CD4-positive, alpha-beta T cell (primary cell): ENCODE measurements at regions of chr22 and their contacts with region 1.

Region 1: GRCh38 chr22:25172153-25172552 is 27.5 kb upstream of the CRYBB3 start:
- DNase-seq: peak in 13 of 14 experiments; percentile 4 to 56 (median 32)
- ATAC-seq: peak; percentile 43
- H3K4me3 ChIP-seq: no peak overlapping the region
- H3K4me3 Mint-ChIP-seq: no peak overlapping the region
- H3K27ac ChIP-seq: no peak overlapping the region
- H3K27ac Mint-ChIP-seq: no peak overlapping the region
- H3K4me1 ChIP-seq: no peaks in the 10 kb centered on the region
- H3K4me1 Mint-ChIP-seq: no peaks in the 10 kb centered on the region
- H3K27me3 ChIP-seq: no peaks in the 10 kb centered on the region
- H3K27me3 Mint-ChIP-seq: no peaks in the 10 kb centered on the region
- CTCF ChIP-seq: peak; percentile 61

Region 2: DNA sequence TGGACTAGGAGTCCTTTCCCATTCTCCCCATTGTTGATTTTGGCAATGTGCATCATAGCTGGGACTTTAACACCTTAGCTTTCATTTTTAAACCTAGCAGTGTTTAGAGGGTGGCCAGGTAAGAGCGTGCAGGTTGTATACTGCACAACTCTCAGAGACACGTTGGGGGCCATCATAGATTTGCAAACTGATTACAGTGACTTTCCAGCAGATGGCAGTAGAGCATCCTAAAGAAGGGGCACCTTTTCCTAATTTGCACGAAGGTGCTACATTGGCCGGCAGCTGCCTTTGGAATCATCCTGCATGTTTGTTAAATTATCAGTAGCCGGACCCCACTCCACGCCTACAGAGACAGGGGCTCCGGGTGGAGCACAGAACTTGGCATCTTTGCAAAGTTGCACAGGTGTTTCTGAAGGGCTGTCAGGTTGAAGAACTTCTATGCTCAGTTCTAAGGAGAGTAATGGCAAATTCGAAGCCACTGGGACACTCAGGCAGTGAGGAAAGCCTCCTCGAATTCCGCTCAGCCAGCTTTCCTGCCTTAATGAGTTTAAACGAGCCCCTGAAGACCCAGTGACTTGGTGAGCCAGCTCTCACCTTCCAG is 233.3 kb before region 1 on chr22:
- CTCF ChIA-PET with region 1: no interaction called
- POLR2A ChIA-PET with region 1: no interaction called
- intact Hi-C with region 1: loop called in 1 of 2 experiments (anchors 5 kb)
- DNase-seq: peak in 5 of 14 experiments; percentile 3 to 70 (median 51)
- ATAC-seq: peak; percentile 62
- H3K4me3 ChIP-seq: no peak overlapping the region
- H3K4me3 Mint-ChIP-seq: no peak overlapping the region
- H3K27ac ChIP-seq: no peak overlapping the region
- H3K27ac Mint-ChIP-seq: no peak overlapping the region
- H3K4me1 ChIP-seq: peaks cover 4% of the 10 kb centered on the region
- H3K4me1 Mint-ChIP-seq: no peaks in the 10 kb centered on the region
- H3K27me3 ChIP-seq: peaks cover 5 to 8% of the 10 kb centered on the region in 2 experiments
- H3K27me3 Mint-ChIP-seq: peaks cover 15% of the 10 kb centered on the region
- CTCF ChIP-seq: peak; percentile 79

Region 3: GRCh38 chr22:24951942-24952836 is 220.0 kb before region 1 on chr22 and contains the start of gene KIAA1671:
- CTCF ChIA-PET with region 1: no interaction called
- POLR2A ChIA-PET with region 1: no interaction called
- intact Hi-C with region 1: loop called in 1 of 2 experiments (anchors 5 kb)
- DNase-seq: peak; percentile 73 to 92 (median 83)
- ATAC-seq: peak; percentile 94
- H3K4me3 ChIP-seq: peak within 1 kb of the TSS; percentile 70
- H3K4me3 Mint-ChIP-seq: peak within 1 kb of the TSS; percentile 90
- H3K27ac ChIP-seq: no peak within 1 kb of the TSS
- H3K27ac Mint-ChIP-seq: no peak within 1 kb of the TSS
- H3K4me1 ChIP-seq: peaks cover 20% of the 10 kb centered on the region
- H3K4me1 Mint-ChIP-seq: peaks cover 19% of the 10 kb centered on the region
- H3K27me3 ChIP-seq: peaks cover 27 to 37% of the 10 kb centered on the region in 2 experiments
- H3K27me3 Mint-ChIP-seq: peaks cover 75% of the 10 kb centered on the region
- CTCF ChIP-seq: peak; percentile 95
- total RNA-seq, gene KIAA1671: 2.6 to 2.9 TPM

Region 4: DNA sequence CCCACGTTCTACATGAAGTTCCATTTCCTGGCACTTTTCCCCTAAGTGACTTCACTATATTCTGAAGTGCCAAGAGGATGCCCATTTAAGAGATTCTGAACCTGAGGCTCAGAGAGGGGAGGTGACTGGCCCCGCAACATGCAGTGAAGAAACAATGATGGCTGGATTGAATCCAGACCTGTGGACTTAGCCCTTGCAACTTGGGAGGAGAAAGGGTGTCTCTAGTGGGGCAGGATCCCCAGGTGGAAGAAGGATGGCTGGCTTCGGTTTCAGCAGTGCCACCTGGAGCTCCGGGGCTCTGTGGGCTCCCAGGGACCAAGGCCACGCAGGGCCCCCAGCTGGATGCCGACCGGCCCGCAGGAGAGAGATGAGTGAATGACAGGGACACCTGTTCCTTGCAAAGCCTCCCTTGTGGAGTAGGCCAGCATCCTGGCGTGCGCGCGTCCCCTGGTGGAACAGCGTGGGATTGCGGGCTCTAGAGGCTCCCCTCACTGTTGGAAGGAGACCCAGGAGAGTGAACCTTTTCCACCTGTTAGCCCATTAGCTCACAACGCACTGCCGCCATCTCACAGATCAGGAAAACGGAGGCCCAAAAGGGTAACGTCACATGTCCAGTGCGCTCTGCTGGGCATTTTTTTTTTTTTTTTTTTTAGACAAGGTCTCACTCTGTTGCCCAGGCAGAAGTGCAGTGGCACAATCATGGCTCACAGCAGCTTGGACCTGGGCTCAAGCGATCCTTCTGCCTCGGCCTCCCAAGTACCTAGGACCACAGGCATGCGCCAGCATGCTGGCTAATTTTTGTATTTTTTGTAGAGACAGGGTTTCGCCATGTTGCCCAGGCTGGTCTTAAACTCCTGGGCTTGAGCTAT is 114.9 kb before region 1 on chr22:
- CTCF ChIA-PET with region 1: interaction called, 3 read pairs
- POLR2A ChIA-PET with region 1: no interaction called
- intact Hi-C with region 1: loop called (anchors 1 kb)
- DNase-seq: peak; percentile 59 to 87 (median 72)
- ATAC-seq: peak; percentile 55
- H3K4me3 ChIP-seq: no peak overlapping the region
- H3K4me3 Mint-ChIP-seq: no peak overlapping the region
- H3K27ac ChIP-seq: no peak overlapping the region
- H3K27ac Mint-ChIP-seq: no peak overlapping the region
- H3K4me1 ChIP-seq: peaks cover 27% of the 10 kb centered on the region
- H3K4me1 Mint-ChIP-seq: peaks cover 33% of the 10 kb centered on the region
- H3K27me3 ChIP-seq: no peaks in the 10 kb centered on the region
- H3K27me3 Mint-ChIP-seq: no peaks in the 10 kb centered on the region
- CTCF ChIP-seq: peak; percentile 80

Region 5: DNA sequence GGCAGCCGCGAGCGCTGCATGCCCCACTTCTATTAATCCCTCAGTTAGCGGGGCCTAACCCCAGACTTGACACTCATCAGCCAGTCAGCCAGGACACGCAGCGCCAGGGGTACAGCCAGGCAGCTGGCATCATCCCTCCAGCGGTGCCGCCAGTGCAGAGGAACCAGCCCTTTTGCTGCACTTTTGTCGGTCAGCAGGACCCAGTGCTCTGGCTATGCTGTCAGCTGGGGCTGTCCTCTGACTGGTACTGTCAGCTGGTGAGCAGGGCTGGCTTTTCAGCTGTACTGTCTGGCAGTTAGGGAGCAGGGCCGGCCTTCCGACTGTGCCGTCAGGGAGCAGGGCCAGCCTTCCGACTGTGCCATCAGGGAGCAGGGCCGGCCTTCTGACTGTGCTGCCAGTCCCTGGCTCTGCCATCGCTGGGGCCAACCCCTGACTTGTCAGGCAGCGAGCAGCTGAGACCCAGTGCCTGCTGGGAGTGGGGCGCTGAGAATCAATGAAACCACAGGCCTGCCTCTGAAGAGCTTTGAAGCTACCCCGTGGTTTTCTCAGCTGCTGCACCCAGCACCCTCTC is 104.2 kb before region 1 on chr22:
- CTCF ChIA-PET with region 1: no interaction called
- POLR2A ChIA-PET with region 1: no interaction called
- intact Hi-C with region 1: no loop called
- DNase-seq: peak; percentile 75 to 97 (median 86)
- ATAC-seq: peak; percentile 83
- H3K4me3 ChIP-seq: peak overlapping the region; percentile 29
- H3K4me3 Mint-ChIP-seq: peak overlapping the region; percentile 73
- H3K27ac ChIP-seq: peak overlapping the region; percentile 83 to 90
- H3K27ac Mint-ChIP-seq: peak overlapping the region; percentile 96
- H3K4me1 ChIP-seq: peaks cover 93% of the 10 kb centered on the region
- H3K4me1 Mint-ChIP-seq: peaks cover 81% of the 10 kb centered on the region
- H3K27me3 ChIP-seq: no peaks in the 10 kb centered on the region
- H3K27me3 Mint-ChIP-seq: no peaks in the 10 kb centered on the region
- CTCF ChIP-seq: no peak

Region 6: DNA sequence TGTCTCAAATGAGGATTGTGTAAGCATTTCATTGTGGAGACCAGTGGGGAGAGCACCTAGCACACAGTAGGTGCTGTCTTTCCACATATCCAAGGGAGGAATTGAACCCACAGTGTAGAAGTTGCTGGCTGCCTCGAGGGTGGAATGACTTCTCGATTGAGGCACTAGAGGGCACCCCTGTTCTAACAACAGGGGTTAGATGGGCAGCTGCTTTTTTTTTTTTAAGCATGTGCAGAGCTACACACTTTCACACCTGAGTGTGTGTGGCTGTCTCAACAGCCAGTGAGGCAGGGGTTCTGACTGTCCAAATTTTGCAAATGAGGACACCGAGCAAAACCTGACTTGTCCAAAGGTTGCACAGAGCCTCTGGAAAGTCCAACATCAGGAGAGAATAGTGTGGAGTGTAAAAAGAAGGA is 90.7 kb before region 1 on chr22:
- CTCF ChIA-PET with region 1: no interaction called
- POLR2A ChIA-PET with region 1: no interaction called
- intact Hi-C with region 1: loop called (anchors 1 to 2 kb)
- DNase-seq: peak; percentile 23 to 74 (median 46)
- ATAC-seq: peak; percentile 84
- H3K4me3 ChIP-seq: no peak overlapping the region
- H3K4me3 Mint-ChIP-seq: no peak overlapping the region
- H3K27ac ChIP-seq: no peak overlapping the region
- H3K27ac Mint-ChIP-seq: peak overlapping the region; percentile 63
- H3K4me1 ChIP-seq: peaks cover 29% of the 10 kb centered on the region
- H3K4me1 Mint-ChIP-seq: peaks cover 55% of the 10 kb centered on the region
- H3K27me3 ChIP-seq: no peaks in the 10 kb centered on the region
- H3K27me3 Mint-ChIP-seq: no peaks in the 10 kb centered on the region
- CTCF ChIP-seq: peak; percentile 68

Region 7: DNA sequence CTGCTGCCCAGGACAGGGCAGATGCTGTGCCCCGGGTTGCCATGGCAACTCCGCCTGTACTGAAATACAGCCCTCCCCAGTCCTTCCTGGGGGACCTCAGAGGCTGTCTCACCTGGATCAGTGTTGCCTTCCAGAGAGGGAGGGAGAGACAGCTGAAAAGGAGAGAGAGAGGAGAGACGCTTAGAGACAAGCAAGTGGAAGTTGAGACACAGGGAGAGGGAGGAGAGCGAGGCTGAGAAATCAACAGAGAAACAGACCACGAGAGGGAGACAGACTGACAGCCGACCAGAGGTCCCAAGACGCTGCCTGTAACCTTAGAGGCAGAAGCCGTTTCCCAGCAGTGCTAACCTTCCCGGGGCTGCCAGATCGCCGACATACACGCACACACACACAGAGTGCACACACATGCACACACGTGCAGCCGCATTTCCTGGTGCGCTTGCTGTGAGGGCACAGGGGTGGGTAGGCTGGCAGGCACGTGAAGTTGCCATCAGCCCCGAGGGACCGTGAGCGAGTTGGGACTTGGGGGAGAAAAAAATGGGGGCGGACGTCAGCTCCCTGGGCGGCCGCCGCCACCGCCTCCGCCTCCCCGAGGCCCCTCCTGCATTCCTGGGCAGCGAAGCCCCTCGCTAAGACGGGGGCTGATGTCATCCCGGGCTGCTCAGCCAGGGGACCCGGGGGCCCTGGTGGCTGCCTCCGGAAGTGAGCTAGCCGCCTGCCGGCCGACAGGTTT is 61.1 kb before region 1 on chr22:
- CTCF ChIA-PET with region 1: no interaction called
- POLR2A ChIA-PET with region 1: no interaction called
- intact Hi-C with region 1: loop called in 1 of 2 experiments (anchors 10 kb)
- DNase-seq: peak; percentile 32 to 80 (median 48)
- ATAC-seq: peak; percentile 86
- H3K4me3 ChIP-seq: peak overlapping the region; percentile 74
- H3K4me3 Mint-ChIP-seq: peak overlapping the region; percentile 90
- H3K27ac ChIP-seq: no peak overlapping the region
- H3K27ac Mint-ChIP-seq: peak overlapping the region; percentile 65
- H3K4me1 ChIP-seq: peaks cover 20% of the 10 kb centered on the region
- H3K4me1 Mint-ChIP-seq: peaks cover 29% of the 10 kb centered on the region
- H3K27me3 ChIP-seq: peaks cover 0 to 2% of the 10 kb centered on the region in 2 experiments
- H3K27me3 Mint-ChIP-seq: no peaks in the 10 kb centered on the region
- CTCF ChIP-seq: peak; percentile 63